ENCODE measurements at regions of chr17 and their contacts with region 1.

Region 1: DNA sequence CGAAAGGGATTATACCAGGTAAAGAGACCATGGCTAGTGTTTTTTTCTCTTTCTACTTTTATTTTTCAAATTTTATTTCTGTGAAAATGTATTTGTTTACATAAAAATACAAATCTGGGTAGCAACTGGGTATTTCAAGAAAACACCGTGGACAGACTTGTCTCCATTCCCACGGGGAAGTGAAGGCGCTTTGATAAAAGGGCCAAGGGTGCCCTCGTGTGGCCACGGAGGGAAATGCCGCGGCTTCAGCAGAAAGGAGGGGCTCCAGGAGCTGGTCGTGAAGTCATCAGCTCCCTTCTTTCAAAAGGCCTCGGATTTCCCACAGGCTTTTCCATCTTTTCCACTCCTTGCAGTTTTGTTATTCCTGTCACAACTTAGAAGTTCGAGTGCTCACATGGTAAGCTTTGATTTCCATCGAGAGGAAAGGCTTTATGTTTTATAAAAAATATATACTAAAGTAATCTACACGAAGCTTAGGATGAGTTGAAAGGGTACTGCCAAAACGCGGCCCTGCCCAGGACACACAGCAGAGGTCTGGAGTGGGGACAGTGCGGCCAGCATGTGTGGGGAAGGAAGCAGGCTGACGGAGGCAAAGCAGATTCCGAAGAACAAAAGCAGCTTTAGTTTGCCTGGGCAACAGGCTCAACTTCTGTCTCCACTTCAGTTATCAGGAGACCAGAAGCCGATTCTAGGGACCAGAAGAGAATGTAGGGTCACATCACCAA is 15.3 kb upstream of the MNT start:
- DNase-seq: peak; percentile 90 to 91
- ATAC-seq: peak; percentile 53 to 86 (median 80)
- H3K4me3 ChIP-seq: no peak overlapping the region
- H3K27ac ChIP-seq: peak overlapping the region in 3 of 10 donors; percentile 9 to 10 (median 9)
- H3K4me1 ChIP-seq: peaks cover 3 to 46% (median 28%) of the 10 kb centered on the region in 9 donors
- H3K27me3 ChIP-seq: no peaks in the 10 kb centered on the region
- CTCF ChIP-seq: peak; percentile 95 to 99 (median 98)

Region 2: GRCh38 chr17:2366747-2367494 is 49.3 kb before region 1 on chr17:
- intact Hi-C with region 1: loop called in 2 of 10 experiments (anchors 10 kb)
- DNase-seq: no peak
- ATAC-seq: no peak
- H3K4me3 ChIP-seq: no peak overlapping the region
- H3K27ac ChIP-seq: no peak overlapping the region
- H3K4me1 ChIP-seq: peaks cover 20 to 50% (median 39%) of the 10 kb centered on the region in 9 donors
- H3K27me3 ChIP-seq: no peaks in the 10 kb centered on the region
- CTCF ChIP-seq: no peak

Region 3: GRCh38 chr17:2380226-2380922 is 35.8 kb before region 1 on chr17:
- intact Hi-C with region 1: loop called (anchors 1 to 2 kb)
- DNase-seq: no peak
- ATAC-seq: peak in 1 of 8 donors; percentile 5
- H3K4me3 ChIP-seq: no peak overlapping the region
- H3K27ac ChIP-seq: no peak overlapping the region
- H3K4me1 ChIP-seq: peaks cover 0 to 22% (median 14%) of the 10 kb centered on the region in 9 donors
- H3K27me3 ChIP-seq: no peaks in the 10 kb centered on the region
- CTCF ChIP-seq: no peak

Region 4: DNA sequence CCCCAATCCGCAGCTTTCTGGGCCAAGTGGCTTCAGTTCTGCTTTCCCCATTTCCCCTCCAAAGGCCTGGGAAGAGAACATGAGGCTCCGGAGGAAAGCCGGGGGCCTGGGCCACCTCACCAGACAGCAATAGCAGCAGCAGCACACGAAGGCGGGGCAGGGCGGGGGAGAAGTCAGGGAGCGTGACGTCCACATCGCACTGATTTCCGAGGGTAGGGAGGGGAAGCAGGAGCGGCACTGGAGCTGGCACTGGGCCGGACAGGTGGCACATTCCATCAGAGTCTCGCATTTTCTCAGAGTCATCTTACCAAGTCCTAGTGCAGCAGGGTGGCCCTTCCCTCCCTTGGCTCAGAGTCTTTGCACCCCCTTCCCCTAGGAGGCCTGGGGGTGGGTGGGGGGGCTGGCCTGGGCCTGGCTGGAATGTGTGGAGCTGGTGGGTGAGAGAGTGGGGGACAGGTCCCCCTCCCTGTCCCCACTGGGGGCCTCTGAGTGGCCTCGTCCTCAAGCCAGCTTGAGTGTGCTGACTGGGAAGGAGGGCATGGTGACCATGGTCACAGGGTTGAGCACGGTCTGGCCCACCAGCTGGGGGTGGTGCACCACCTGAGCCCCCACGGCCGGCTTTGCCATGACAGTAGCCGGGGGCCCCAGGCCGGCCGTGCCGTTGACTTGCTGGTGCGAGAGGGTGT is 29.6 kb before region 1 on chr17:
- intact Hi-C with region 1: loop called (anchors 1 to 2 kb)
- DNase-seq: no peak
- ATAC-seq: no peak
- H3K4me3 ChIP-seq: no peak overlapping the region
- H3K27ac ChIP-seq: no peak overlapping the region
- H3K4me1 ChIP-seq: peaks cover 16 to 49% (median 34%) of the 10 kb centered on the region in 9 donors
- H3K27me3 ChIP-seq: no peaks in the 10 kb centered on the region
- CTCF ChIP-seq: no peak

Region 5: GRCh38 chr17:2592971-2593820 is 177.0 kb after region 1 on chr17 and contains the start of gene PAFAH1B1:
- intact Hi-C with region 1: loop called in 1 of 10 experiments (anchors 10 kb)
- DNase-seq: peak; percentile 93 to 94
- ATAC-seq: peak; percentile 91 to 97 (median 95)
- H3K4me3 ChIP-seq: peak within 1 kb of the TSS; percentile 65 to 99 (median 98)
- H3K27ac ChIP-seq: peak within 1 kb of the TSS; percentile 84 to 100 (median 99)
- H3K4me1 ChIP-seq: peaks cover 3 to 46% (median 41%) of the 10 kb centered on the region in 9 donors
- H3K27me3 ChIP-seq: no peaks in the 10 kb centered on the region
- CTCF ChIP-seq: peak in 5 of 9 donors; percentile 19 to 54 (median 38)
- total RNA-seq, gene PAFAH1B1: 113 to 155 (median 132) TPM